PC-9 (cell line): ENCODE measurements at regions of chr5 and their contacts with region 1.

Region 1: DNA sequence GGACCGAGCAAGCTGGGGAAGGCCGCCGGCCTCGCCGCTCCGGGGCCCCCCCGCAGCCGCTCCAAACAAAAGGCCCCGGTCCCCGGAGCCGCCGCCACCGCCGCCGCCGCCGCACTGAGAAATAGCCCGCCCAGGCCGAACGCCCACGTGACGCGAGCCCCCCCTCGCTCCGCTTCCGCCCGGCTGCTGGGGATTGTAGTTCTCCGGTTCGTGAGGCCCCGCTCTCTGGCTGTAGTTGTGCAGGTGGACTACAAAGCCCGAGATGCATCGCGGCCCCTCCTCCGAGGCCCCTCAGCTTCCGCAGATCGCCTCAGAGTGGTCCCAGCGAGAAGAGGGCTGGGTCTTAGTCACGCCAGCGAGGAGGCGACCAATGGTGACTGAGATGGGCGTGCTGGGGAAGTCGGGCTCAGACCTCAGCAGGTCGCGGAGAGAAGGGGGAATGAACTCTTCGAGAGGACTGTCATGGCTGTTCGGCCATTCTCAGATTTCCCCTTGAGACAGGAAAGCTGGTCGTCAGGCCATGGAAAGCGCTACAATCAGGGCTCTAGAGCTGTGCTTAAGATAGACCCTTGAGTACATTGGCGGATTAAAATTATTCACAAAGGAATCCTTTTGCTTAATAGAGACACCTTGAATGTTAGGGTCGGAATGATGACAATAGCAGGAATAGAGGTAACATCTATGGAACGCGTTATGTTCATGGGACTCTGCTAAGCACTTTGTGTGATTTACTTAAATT is 489 bp upstream of the PANK3 start:
- DNase-seq: peak; percentile 97 to 99
- H3K4me3 ChIP-seq: peak overlapping the region; percentile 99
- H3K27ac ChIP-seq: peak overlapping the region; percentile 80
- H3K4me1 ChIP-seq: peaks cover 26% of the 10 kb centered on the region
- H3K27me3 ChIP-seq: no peaks in the 10 kb centered on the region
- CTCF ChIP-seq: no peak

Region 2: DNA sequence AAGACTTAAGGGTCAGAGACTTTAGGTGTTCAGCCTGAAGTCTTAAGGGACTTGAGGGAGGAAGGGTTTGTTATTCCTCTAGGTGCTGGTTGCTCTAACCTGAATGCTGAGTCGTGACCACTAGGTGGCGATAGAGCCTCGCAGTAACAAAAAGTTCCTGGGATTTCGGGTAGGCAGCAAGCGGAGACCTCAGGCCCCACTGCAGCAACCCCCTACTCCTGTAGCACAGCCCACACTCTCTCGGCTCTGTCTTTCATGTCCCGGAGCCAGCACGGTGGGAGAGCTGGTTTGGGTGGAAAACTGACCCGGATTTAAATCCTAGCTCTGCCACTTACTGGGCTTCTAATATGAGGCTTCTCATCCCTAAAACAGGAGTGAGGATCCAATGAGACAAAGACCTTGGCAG is 99.9 kb after region 1 on chr5:
- CTCF ChIA-PET with region 1: no interaction called
- POLR2A ChIA-PET with region 1: no interaction called
- intact Hi-C with region 1: loop called (anchors 1 kb)
- DNase-seq: peak in 1 of 2 experiments; percentile 63
- H3K4me3 ChIP-seq: no peak overlapping the region
- H3K27ac ChIP-seq: no peak overlapping the region
- H3K4me1 ChIP-seq: no peaks in the 10 kb centered on the region
- H3K27me3 ChIP-seq: peaks cover 22% of the 10 kb centered on the region; the same call in 1 of the 2 replicates
- CTCF ChIP-seq: peak; percentile 95

Region 3: GRCh38 chr5:169350759-169351240 is 771.1 kb after region 1 on chr5:
- CTCF ChIA-PET with region 1: no interaction called
- POLR2A ChIA-PET with region 1: no interaction called
- intact Hi-C with region 1: loop called (anchors 2 kb)
- DNase-seq: peak; percentile 86 to 98
- H3K4me3 ChIP-seq: no peak overlapping the region
- H3K27ac ChIP-seq: peak overlapping the region; percentile 98
- H3K4me1 ChIP-seq: peaks cover 66% of the 10 kb centered on the region
- H3K27me3 ChIP-seq: no peaks in the 10 kb centered on the region
- CTCF ChIP-seq: no peak